ENCODE measurements at regions of chr10 and their contacts with region 1.

Region 1: DNA sequence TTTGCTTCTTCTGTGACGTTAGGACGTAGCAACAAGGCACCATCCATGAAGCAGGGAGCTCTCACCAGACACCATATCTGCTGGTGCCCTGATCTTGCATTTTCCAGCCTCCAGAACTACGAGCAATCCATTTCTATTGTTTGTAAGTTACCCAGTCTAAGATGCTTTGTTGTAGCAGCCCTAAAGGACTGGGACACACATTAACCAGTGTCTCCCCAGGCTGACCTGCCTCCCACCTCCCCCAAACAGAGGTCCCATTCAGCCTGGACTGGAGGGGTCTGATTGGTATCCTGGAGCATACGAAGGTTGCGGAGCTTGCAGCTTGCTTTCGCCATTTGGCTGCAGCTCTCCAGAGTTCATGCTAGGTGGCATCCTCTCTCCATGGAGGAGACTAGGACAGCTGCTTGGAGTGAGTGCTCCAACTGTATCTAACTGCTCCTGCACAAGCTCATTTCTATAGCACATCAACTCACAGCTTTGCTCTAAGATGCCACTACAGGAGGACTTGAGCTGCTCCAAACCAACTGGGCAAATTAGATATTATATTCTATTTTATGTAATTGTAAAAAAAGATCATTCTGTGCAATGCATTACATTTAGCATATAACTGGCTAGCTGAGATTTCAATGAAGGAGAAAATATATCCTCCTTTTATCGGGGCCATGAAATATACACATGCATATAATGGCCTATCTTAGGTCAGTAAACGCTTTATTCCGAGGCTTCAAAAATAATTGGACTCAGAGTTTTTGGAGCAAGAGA is 8.0 kb upstream of the GRK5 start:
- DNase-seq: peak; percentile 68
- ATAC-seq: peak; percentile 85
- H3K4me3 Mint-ChIP-seq: no peak overlapping the region
- H3K27ac Mint-ChIP-seq: no peak overlapping the region
- H3K4me1 Mint-ChIP-seq: peaks cover 24% of the 10 kb centered on the region
- H3K27me3 Mint-ChIP-seq: no peaks in the 10 kb centered on the region

Region 2: DNA sequence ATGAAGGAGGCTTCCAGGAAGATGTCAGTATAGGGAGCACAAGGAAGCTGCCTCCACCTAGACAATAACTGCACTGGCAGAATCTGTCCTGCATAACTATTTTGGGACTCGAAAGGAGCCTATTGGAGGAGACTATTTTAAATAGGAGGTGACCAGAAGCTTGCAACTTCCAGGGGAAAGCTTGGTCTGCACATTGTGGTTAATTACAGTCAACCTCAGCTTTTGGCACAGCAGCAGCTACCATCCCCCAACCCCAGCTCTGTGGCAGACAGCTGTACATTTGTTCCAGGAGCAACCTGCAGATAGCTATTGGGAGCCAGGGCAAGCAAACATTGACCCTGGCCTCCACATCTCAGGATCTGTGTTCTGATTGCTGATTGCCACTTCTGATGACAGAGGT is 216.1 kb before region 1 on chr10:
- CTCF ChIA-PET with region 1: no interaction called
- POLR2A ChIA-PET with region 1: no interaction called
- DNase-seq: no peak
- ATAC-seq: no peak
- H3K4me3 Mint-ChIP-seq: no peak overlapping the region
- H3K27ac Mint-ChIP-seq: no peak overlapping the region
- H3K4me1 Mint-ChIP-seq: peaks cover 20% of the 10 kb centered on the region
- H3K27me3 Mint-ChIP-seq: peaks cover 2% of the 10 kb centered on the region

Region 3: GRCh38 chr10:119139464-119140067 is 59.8 kb before region 1 on chr10:
- CTCF ChIA-PET with region 1: interaction called, 21 read pairs
- POLR2A ChIA-PET with region 1: no interaction called
- DNase-seq: peak; percentile 62
- ATAC-seq: peak; percentile 83
- H3K4me3 Mint-ChIP-seq: no peak overlapping the region
- H3K27ac Mint-ChIP-seq: peak overlapping the region; percentile 73
- H3K4me1 Mint-ChIP-seq: peaks cover 26% of the 10 kb centered on the region
- H3K27me3 Mint-ChIP-seq: no peaks in the 10 kb centered on the region

Region 4: GRCh38 chr10:119305860-119306513 is 106.6 kb after region 1 on chr10:
- CTCF ChIA-PET with region 1: interaction called, 14 read pairs
- POLR2A ChIA-PET with region 1: no interaction called
- DNase-seq: peak; percentile 91
- ATAC-seq: peak; percentile 86
- H3K4me3 Mint-ChIP-seq: peak overlapping the region; percentile 80
- H3K27ac Mint-ChIP-seq: peak overlapping the region; percentile 100
- H3K4me1 Mint-ChIP-seq: peaks cover 78% of the 10 kb centered on the region
- H3K27me3 Mint-ChIP-seq: peaks cover 15% of the 10 kb centered on the region

Region 5: DNA sequence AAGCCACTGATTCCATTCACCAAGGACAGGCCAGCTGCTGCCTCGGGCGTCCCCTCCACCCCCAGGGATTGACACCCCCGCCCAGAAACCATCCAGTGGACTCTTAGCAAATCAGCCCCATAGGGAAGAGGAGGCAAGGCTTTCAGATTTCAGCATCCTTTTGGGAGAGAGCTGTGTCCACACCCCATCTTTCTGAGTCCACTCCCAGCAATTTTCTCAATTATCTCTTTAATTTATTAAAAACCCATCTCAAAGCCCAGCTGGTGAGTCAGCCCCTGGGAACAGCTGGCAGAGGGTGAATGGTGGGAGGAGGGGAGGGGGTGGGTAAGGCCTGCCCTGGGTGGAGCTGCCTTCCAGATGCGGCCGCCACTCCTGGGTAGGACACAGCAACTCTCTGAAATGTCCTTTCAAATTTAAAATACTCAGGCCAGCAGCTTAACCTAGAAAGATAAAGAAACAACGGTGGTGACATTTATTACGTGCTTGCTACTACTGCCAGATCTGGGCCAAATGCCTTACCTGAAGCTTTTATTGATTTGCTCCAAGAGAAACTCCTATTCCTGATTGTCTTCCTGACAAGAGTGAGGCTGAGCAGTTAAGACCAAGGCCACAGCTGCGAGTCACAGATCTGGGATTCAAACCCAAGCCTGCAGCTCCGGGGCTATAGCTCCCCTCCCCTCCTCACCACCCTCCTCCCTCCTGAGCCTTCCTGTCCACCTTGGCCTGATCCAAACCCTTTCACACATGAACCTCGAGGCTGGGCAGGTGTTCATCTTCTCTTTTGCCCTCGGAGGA is 222.7 kb after region 1 on chr10:
- CTCF ChIA-PET with region 1: interaction called, 66 read pairs
- POLR2A ChIA-PET with region 1: no interaction called
- DNase-seq: no peak
- ATAC-seq: no peak
- H3K4me3 Mint-ChIP-seq: no peak overlapping the region
- H3K27ac Mint-ChIP-seq: no peak overlapping the region
- H3K4me1 Mint-ChIP-seq: no peaks in the 10 kb centered on the region
- H3K27me3 Mint-ChIP-seq: no peaks in the 10 kb centered on the region

Region 6: DNA sequence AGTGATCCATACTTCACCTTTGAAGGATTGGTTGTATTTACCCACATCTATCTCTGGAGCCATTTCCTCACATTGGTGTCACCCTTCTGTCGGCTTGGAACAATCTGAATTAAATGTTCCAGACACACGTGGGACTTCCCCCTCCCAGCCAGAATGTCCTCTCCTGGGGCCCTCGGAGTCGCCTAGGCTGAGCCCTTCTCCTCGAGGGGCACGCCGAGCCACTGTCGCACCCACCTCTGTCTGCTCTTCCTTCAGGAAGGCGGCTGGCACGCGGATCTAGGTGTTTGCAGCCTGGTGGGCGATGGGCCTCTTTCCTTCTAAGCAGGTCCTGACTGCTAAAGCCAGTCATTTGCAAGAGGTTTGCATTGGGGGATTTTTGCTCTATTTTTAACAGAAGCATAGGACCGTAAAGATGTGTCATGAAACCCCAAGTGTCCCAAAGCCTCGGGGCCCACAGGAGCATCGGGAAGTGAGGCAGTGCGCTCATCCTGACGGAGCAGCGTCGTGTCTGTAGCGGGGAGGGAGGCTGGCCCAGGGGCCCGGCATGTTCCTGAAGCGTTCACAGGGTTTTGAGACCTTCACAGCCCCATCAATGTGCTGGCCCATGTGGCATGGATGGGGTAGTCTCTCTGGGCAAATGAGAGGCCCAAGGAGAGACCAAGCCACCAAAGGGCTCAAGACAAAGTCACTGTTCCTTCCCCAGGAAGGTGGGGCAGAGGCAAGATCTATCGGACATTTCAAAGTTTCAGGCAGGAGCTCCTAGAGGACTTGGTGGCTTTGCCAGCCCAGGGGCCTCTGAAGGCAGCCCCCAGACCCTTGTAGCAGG is 256.4 kb after region 1 on chr10:
- CTCF ChIA-PET with region 1: interaction called, 12 read pairs
- POLR2A ChIA-PET with region 1: no interaction called
- DNase-seq: no peak
- ATAC-seq: no peak
- H3K4me3 Mint-ChIP-seq: no peak overlapping the region
- H3K27ac Mint-ChIP-seq: no peak overlapping the region
- H3K4me1 Mint-ChIP-seq: no peaks in the 10 kb centered on the region
- H3K27me3 Mint-ChIP-seq: no peaks in the 10 kb centered on the region

Region 7: DNA sequence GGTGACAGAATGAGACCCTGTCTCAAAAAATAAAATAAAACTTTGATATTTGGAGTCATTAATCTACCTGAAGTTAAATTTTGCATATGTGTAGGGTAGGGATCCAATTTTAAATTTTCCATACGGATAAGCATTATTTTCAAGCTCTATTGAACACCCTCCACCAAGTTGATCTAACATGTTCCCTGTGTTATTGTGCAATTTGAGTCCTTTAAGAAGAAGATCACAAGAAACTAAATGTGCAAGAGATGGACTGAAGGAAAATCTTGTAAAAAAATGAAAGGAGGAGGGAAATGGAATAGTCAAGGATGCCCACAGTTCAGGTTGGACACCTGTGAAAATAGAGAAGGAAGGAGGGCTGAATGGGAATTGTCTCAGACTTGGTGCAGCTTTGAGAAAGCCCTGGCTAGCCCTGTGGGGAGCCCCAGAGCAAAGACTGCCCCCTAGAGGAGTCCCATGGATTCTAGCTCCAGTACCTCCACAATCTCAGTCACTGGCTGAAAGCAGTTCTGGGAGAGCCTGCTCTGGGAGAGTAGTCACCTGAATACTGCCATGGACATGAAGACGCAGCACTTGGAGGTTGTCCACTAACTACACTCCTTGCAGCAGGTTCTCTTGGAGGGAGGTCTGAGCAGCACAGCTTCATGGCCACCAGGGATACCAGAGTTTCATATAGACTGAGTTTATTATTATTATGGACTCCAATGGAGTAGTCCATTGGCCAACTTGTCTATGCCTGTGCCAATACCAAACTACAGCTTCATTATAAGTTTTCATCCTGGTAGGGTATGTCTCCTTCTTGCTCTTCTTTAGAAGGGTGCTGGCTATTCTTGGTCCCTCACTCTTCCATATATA is 403.1 kb after region 1 on chr10:
- CTCF ChIA-PET with region 1: interaction called, 11 read pairs
- POLR2A ChIA-PET with region 1: no interaction called
- DNase-seq: peak; percentile 66
- ATAC-seq: peak; percentile 89
- H3K4me3 Mint-ChIP-seq: no peak overlapping the region
- H3K27ac Mint-ChIP-seq: no peak overlapping the region
- H3K4me1 Mint-ChIP-seq: peaks cover 10% of the 10 kb centered on the region
- H3K27me3 Mint-ChIP-seq: peaks cover 3% of the 10 kb centered on the region

Region 8: GRCh38 chr10:119644205-119644814 is 444.9 kb after region 1 on chr10:
- CTCF ChIA-PET with region 1: no interaction called
- POLR2A ChIA-PET with region 1: no interaction called
- DNase-seq: no peak
- ATAC-seq: no peak
- H3K4me3 Mint-ChIP-seq: no peak overlapping the region
- H3K27ac Mint-ChIP-seq: no peak overlapping the region
- H3K4me1 Mint-ChIP-seq: peaks cover 22% of the 10 kb centered on the region
- H3K27me3 Mint-ChIP-seq: peaks cover 4% of the 10 kb centered on the region

Measured in activated CD8-positive, alpha-beta T cell treated with anti-CD3 and anti-CD28 coated beads, Interleukin-2, amount 10 ng/mL, durations not matched to agents 7 days and 5 days (primary cell).